Mammary epithelial cell (primary cell): ENCODE measurements at regions of chr18 and their contacts with region 1.

Region 1: DNA sequence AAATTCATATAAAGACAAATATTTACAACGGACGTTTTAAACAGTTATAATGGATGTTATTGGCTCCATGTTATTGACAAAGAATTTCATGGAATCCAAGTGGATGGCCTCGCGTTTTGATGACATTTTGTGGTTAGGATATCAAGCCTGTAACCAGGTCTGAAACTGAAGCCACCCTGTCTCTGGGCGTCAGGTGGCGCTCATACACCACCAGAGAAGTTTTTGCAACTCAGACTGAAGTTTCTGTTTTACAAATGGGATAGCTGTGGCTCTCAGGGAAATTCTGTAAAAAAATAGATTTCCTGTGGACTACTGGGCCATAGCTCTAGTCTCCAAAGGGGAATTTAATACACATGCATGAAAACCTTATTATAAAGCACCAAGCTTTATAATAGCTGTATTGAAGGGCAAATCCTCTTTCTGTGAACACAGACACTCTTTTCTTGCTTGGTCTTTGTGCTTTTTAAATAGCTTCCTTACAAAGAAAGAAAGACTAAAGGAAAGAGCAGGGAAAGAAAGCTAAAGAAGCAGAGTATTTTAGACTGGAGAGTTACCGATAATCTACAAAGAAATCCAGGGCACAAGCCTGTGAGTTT is 86.7 kb downstream of the C18orf54 start:
- DNase-seq: peak; percentile 35
- H3K4me3 ChIP-seq: no peak overlapping the region
- H3K27ac ChIP-seq: no peak overlapping the region
- H3K4me1 ChIP-seq: no peaks in the 10 kb centered on the region
- H3K27me3 ChIP-seq: peaks cover 1% of the 10 kb centered on the region
- CTCF ChIP-seq: peak; percentile 81 to 90

Region 2: DNA sequence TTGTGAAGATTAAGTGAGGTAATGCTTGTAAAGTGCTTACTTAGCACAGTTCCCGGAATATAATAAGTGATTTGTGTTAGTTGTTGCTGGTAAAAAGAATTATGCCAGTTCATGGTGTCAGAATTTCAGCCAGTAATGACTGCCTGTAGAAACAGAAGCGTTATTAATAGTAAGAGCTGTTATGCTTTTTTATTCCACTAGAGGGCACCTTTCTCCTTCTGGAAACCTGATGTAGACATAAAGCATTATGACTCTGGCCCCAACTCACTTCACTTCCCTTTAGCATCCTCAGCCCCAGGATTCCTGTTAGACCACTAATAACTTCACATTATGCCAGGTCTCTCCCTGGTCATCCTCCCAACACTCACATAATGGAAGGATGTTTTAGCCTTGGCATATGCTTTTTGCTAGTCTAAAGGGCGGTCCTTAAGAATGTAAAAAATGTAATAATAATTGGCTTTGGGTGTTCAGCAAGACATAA is 51.8 kb before region 1 on chr18:
- CTCF ChIA-PET with region 1: no interaction called
- dilution Hi-C with region 1: no loop called
- in situ Hi-C with region 1: no loop called
- intact Hi-C with region 1: loop called (anchors 2 kb)
- DNase-seq: peak; percentile 44
- H3K4me3 ChIP-seq: no peak overlapping the region
- H3K27ac ChIP-seq: no peak overlapping the region
- H3K4me1 ChIP-seq: peaks cover 16% of the 10 kb centered on the region
- H3K27me3 ChIP-seq: peaks cover 2% of the 10 kb centered on the region
- CTCF ChIP-seq: peak; percentile 68 to 72

Region 3: GRCh38 chr18:54480616-54481015 is 36.2 kb after region 1 on chr18:
- CTCF ChIA-PET with region 1: no interaction called
- dilution Hi-C with region 1: loop called (anchors 5 kb)
- in situ Hi-C with region 1: no loop called
- intact Hi-C with region 1: no loop called
- DNase-seq: no peak
- H3K4me3 ChIP-seq: no peak overlapping the region
- H3K27ac ChIP-seq: no peak overlapping the region
- H3K4me1 ChIP-seq: no peaks in the 10 kb centered on the region
- H3K27me3 ChIP-seq: peaks cover 10% of the 10 kb centered on the region
- CTCF ChIP-seq: no peak

Region 4: GRCh38 chr18:54558609-54559585 is 114.5 kb after region 1 on chr18:
- CTCF ChIA-PET with region 1: interaction called, 3 read pairs
- dilution Hi-C with region 1: no loop called
- in situ Hi-C with region 1: no loop called
- intact Hi-C with region 1: loop called (anchors 2 kb)
- DNase-seq: peak; percentile 4
- H3K4me3 ChIP-seq: no peak overlapping the region
- H3K27ac ChIP-seq: no peak overlapping the region
- H3K4me1 ChIP-seq: no peaks in the 10 kb centered on the region
- H3K27me3 ChIP-seq: no peaks in the 10 kb centered on the region
- CTCF ChIP-seq: peak; percentile 73 to 76

Region 5: DNA sequence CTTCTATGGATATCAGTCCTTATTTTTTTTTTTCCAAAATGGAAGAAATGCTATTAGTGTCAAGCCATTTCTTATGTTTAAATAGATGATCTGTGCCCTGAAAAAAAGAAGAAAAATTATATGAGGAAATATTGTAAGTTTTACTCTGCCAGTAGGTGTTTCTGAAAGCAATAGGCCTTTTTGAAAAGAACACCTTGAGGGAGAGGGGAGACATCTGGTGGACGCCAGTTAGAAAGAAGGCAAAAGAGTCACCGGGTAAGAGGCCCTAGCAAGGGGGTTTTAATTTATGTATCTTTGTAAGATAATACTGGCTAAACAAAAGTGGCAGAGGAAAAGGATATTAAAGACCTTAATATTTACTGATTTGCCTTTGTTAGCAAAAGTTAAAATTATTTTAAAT is 202.8 kb after region 1 on chr18:
- CTCF ChIA-PET with region 1: no interaction called
- dilution Hi-C with region 1: no loop called
- in situ Hi-C with region 1: no loop called
- intact Hi-C with region 1: loop called (anchors 1 kb)
- DNase-seq: peak; percentile 37
- H3K4me3 ChIP-seq: no peak overlapping the region
- H3K27ac ChIP-seq: no peak overlapping the region
- H3K4me1 ChIP-seq: no peaks in the 10 kb centered on the region
- H3K27me3 ChIP-seq: peaks cover 6% of the 10 kb centered on the region
- CTCF ChIP-seq: peak; percentile 32 to 81

Region 6: GRCh38 chr18:54671291-54671881 is 227.0 kb after region 1 on chr18:
- CTCF ChIA-PET with region 1: no interaction called
- dilution Hi-C with region 1: no loop called
- in situ Hi-C with region 1: no loop called
- intact Hi-C with region 1: loop called (anchors 1 kb)
- DNase-seq: peak; percentile 11
- H3K4me3 ChIP-seq: no peak overlapping the region
- H3K27ac ChIP-seq: no peak overlapping the region
- H3K4me1 ChIP-seq: no peaks in the 10 kb centered on the region
- H3K27me3 ChIP-seq: no peaks in the 10 kb centered on the region
- CTCF ChIP-seq: peak; percentile 35 to 49

Region 7: GRCh38 chr18:54983041-54983686 is 538.7 kb after region 1 on chr18:
- CTCF ChIA-PET with region 1: no interaction called
- dilution Hi-C with region 1: no loop called
- in situ Hi-C with region 1: loop called in 1 of 2 experiments (anchors 25 kb)
- intact Hi-C with region 1: loop called (anchors 1 kb)
- DNase-seq: peak; percentile 48
- H3K4me3 ChIP-seq: no peak overlapping the region
- H3K27ac ChIP-seq: no peak overlapping the region
- H3K4me1 ChIP-seq: no peaks in the 10 kb centered on the region
- H3K27me3 ChIP-seq: no peaks in the 10 kb centered on the region
- CTCF ChIP-seq: peak; percentile 52 to 62